ENCODE measurements at regions of chr2 and their contacts with region 1.

Region 1: DNA sequence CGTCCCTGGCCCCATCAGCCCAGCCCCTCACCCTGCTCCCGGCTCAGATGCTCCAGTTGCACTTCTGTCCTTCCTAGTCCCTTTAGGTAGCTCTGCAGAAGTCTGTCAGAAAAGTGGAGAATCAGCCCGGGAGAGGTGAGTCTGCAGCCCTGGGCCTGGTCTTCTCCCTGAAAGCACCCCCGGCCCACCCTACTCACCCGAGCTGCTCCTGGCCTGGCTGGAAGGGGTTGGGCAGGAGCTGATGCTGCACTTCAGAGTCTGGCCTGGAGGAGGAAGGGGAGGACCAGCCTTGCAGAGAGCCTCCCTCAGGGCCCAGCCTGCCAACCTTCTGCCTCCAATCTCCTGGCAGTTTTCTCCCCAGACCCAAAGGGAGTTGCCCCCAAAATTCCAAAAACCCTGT is 15.8 kb downstream of the KHK start:
- DNase-seq: no peak

Region 2: GRCh38 chr2:27071277-27071989 is 30.9 kb before region 1 on chr2 and contains the start of gene OST4:
- CTCF ChIA-PET with region 1: no interaction called
- POLR2A ChIA-PET with region 1: no interaction called
- DNase-seq: peak; percentile 96

Region 3: DNA sequence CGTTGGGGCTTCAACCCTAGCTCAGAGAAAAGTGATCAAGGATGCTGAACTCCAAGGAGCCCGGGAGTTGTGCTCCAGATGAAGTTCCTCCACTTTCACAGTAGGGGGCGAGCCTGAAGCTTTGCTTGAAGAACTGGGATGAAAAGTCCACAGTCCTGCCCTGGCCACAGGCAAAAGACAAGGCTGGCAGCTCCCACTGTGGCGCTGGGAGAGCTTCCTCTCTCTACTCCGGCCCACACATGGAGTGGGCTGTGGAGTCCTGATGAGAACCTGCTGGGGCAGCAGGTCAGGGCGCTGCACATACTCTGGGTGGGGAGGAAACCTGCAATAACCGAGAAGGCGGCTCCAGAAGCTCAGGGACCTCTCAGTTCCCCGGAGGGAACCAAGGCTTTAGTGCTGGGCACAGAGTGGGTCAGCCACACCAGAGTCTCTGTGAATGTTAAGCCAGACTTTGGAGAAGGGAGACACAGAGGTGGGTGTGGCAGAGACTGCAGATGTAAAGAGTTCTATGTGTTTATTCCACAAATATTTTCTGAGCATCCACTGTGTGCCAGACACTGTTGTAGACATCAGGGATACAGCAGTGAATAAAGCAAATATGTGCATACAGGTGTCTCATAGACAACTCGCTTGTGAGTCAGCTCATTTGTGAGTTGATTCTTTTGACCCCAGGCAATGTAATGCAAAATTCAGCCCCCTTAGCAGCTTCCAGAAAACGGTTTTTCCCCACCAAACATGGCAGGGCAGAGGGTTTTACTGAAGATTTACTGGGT is 621.2 kb after region 1 on chr2:
- CTCF ChIA-PET with region 1: interaction called, 11 read pairs
- POLR2A ChIA-PET with region 1: no interaction called
- DNase-seq: peak; percentile 79

Measured in HEK293T (cell line).